Activated naive CD4-positive, alpha-beta T cell treated with anti-CD3 and anti-CD28 coated beads for 36 hours (primary cell): ENCODE measurements at regions of chr9 and their contacts with region 1.

Region 1: GRCh38 chr9:89278997-89279739 is 31.8 kb upstream of the CKS2 start:
- DNase-seq: peak; percentile 38
- H3K4me3 Mint-ChIP-seq: no peak overlapping the region
- H3K27ac Mint-ChIP-seq: no peak overlapping the region
- H3K4me1 Mint-ChIP-seq: peaks cover 41% of the 10 kb centered on the region
- H3K27me3 Mint-ChIP-seq: peaks cover 1% of the 10 kb centered on the region

Region 2: GRCh38 chr9:89179895-89180667 is 99.1 kb before region 1 on chr9:
- CTCF ChIA-PET with region 1: interaction called, 7 read pairs
- intact Hi-C with region 1: loop called (anchors 1 kb)
- DNase-seq: peak; percentile 88
- H3K4me3 Mint-ChIP-seq: peak overlapping the region; percentile 50
- H3K27ac Mint-ChIP-seq: peak overlapping the region; percentile 1
- H3K4me1 Mint-ChIP-seq: peaks cover 23% of the 10 kb centered on the region
- H3K27me3 Mint-ChIP-seq: peaks cover 50% of the 10 kb centered on the region